ENCODE measurements at regions of chr22 and their contacts with region 1.

Region 1: DNA sequence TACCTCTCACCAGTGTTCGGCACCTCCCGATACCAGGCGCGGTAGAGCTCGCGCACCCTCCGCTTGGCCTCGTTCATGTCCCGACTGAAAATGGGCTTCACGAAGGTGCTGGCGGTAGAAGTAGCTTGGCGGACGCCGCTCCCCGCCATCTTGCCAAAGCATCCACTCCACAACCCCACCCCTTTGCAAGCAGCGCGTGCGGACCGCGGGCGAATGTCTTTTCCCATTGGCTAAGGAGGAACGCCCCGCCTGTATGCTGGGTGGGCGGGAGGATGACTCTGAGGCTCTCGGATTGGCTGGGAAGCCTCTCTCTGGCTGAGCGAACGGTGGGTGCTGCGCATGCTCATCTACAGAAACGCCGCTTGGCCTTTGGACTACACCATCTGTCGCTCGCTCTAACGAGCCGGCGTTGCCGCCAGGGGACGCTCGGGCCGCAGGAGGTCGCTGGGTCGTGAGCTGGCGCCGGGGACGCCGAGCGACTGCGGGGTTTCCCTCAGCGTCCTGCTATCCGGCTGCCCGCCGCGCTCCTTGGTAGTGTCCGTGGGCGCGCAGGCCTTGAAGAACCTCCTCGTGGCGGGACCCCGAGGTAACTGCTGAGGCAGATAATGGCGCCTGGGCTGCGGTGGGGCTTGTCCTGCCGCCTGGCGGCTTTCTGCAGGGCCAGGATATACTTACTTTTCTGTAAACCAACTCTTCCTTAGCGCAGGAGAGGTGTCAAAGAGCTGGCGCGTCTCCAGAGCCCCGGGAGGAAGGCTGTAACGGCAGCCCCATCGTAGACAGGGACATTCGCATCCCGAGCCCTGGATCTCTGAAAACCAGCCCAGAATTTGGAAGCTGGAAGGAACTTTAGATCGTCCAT is at the start of gene NDUFA6:
- DNase-seq: peak; percentile 99
- H3K4me3 Mint-ChIP-seq: peak within 1 kb of the TSS; percentile 97
- H3K27ac Mint-ChIP-seq: peak within 1 kb of the TSS; percentile 99
- H3K4me1 Mint-ChIP-seq: peaks cover 26% of the 10 kb centered on the region
- H3K27me3 Mint-ChIP-seq: no peaks in the 10 kb centered on the region
- total RNA-seq, gene NDUFA6: 124 to 129 TPM

Region 2: DNA sequence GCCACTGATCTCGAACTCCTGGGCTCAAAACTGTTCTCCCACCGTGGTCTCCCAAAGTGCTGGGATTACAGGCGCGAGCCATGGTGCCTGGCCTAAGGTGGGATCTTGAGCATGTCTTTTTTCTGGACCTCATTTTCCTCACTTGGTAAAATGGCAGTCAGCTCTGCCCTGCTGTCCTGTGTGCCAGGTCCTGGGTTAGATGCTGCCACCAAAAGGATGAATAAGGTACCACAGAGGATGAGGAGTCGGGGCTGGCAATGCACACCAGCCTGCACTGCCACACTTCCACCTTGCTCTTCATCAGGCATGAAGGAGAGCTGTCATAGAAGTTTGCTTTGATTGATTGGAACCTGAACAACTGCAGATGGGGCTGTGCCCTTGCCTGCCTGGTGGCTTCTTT is 589.6 kb before region 1 on chr22:
- CTCF ChIA-PET with region 1: no interaction called
- POLR2A ChIA-PET with region 1: no interaction called
- intact Hi-C with region 1: no loop called
- DNase-seq: peak; percentile 33
- H3K4me3 Mint-ChIP-seq: no peak overlapping the region
- H3K27ac Mint-ChIP-seq: no peak overlapping the region
- H3K4me1 Mint-ChIP-seq: no peaks in the 10 kb centered on the region
- H3K27me3 Mint-ChIP-seq: no peaks in the 10 kb centered on the region

Region 3: GRCh38 chr22:41966607-41967240 is 124.1 kb before region 1 on chr22:
- CTCF ChIA-PET with region 1: interaction called, 28 read pairs
- POLR2A ChIA-PET with region 1: interaction called, 3 read pairs
- intact Hi-C with region 1: loop called (anchors 1 kb)
- DNase-seq: peak; percentile 63
- H3K4me3 Mint-ChIP-seq: no peak overlapping the region
- H3K27ac Mint-ChIP-seq: peak overlapping the region; percentile 2
- H3K4me1 Mint-ChIP-seq: peaks cover 7% of the 10 kb centered on the region
- H3K27me3 Mint-ChIP-seq: peaks cover 3% of the 10 kb centered on the region

Region 4: GRCh38 chr22:42111798-42112197 is 21.0 kb after region 1 on chr22:
- CTCF ChIA-PET with region 1: interaction called, 15 read pairs
- POLR2A ChIA-PET with region 1: no interaction called
- intact Hi-C with region 1: no loop called
- DNase-seq: no peak
- H3K4me3 Mint-ChIP-seq: no peak overlapping the region
- H3K27ac Mint-ChIP-seq: no peak overlapping the region
- H3K4me1 Mint-ChIP-seq: no peaks in the 10 kb centered on the region
- H3K27me3 Mint-ChIP-seq: no peaks in the 10 kb centered on the region

Region 5: GRCh38 chr22:42269407-42270177 is 178.8 kb after region 1 on chr22:
- CTCF ChIA-PET with region 1: no interaction called
- POLR2A ChIA-PET with region 1: no interaction called
- intact Hi-C with region 1: loop called (anchors 1 kb)
- DNase-seq: peak; percentile 84
- H3K4me3 Mint-ChIP-seq: peak overlapping the region; percentile 84
- H3K27ac Mint-ChIP-seq: peak overlapping the region; percentile 72
- H3K4me1 Mint-ChIP-seq: peaks cover 44% of the 10 kb centered on the region
- H3K27me3 Mint-ChIP-seq: no peaks in the 10 kb centered on the region

Region 6: GRCh38 chr22:42376711-42377554 is 286.1 kb after region 1 on chr22:
- CTCF ChIA-PET with region 1: no interaction called
- POLR2A ChIA-PET with region 1: no interaction called
- intact Hi-C with region 1: no loop called
- DNase-seq: no peak
- H3K4me3 Mint-ChIP-seq: no peak overlapping the region
- H3K27ac Mint-ChIP-seq: no peak overlapping the region
- H3K4me1 Mint-ChIP-seq: peaks cover 2% of the 10 kb centered on the region
- H3K27me3 Mint-ChIP-seq: no peaks in the 10 kb centered on the region

Region 7: GRCh38 chr22:42444077-42444904 is 353.5 kb after region 1 on chr22:
- CTCF ChIA-PET with region 1: interaction called, 75 read pairs
- POLR2A ChIA-PET with region 1: interaction called, 23 read pairs
- intact Hi-C with region 1: loop called (anchors 1 kb)
- DNase-seq: peak; percentile 90
- H3K4me3 Mint-ChIP-seq: peak overlapping the region; percentile 68
- H3K27ac Mint-ChIP-seq: peak overlapping the region; percentile 86
- H3K4me1 Mint-ChIP-seq: peaks cover 32% of the 10 kb centered on the region
- H3K27me3 Mint-ChIP-seq: no peaks in the 10 kb centered on the region

Measured in activated CD4-positive, alpha-beta memory T cell treated with anti-CD3 and anti-CD28 coated beads for 36 hours (primary cell).